ENCODE measurements at regions of chr22 and their contacts with region 1.

Region 1: GRCh38 chr22:39003165-39003638 is 10.9 kb upstream of the APOBEC3C start:
- DNase-seq: peak; percentile 51
- ATAC-seq: peak; percentile 94
- H3K4me3 Mint-ChIP-seq: no peak overlapping the region
- H3K27ac Mint-ChIP-seq: peak overlapping the region; percentile 41
- H3K4me1 Mint-ChIP-seq: peaks cover 18% of the 10 kb centered on the region
- H3K27me3 Mint-ChIP-seq: peaks cover under 1% of the 10 kb centered on the region
- CTCF ChIP-seq: peak; percentile 16

Region 2: DNA sequence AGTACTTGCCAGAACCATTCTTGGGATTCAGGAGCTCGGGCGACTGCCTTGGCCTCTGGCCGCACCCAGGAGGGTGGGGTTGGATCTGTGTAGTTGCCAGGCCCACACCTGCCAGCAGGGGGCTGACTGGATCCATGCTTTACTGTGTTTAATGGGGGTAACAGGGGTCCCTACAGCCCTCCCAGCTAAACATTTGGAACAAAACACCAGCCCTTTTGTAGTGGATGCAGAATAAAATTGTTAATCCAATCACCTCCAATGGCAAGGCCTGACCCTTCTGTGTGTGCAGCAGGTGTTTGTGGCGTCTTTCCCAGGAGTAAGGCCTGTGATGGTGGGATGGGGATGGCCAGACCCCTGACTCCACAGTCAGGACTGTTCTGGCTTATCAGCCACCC is 269.9 kb before region 1 on chr22:
- CTCF ChIA-PET with region 1: no interaction called
- POLR2A ChIA-PET with region 1: no interaction called
- intact Hi-C with region 1: loop called (anchors 1 kb)
- DNase-seq: no peak
- ATAC-seq: peak; percentile 76
- H3K4me3 Mint-ChIP-seq: no peak overlapping the region
- H3K27ac Mint-ChIP-seq: peak overlapping the region; percentile 75
- H3K4me1 Mint-ChIP-seq: peaks cover 26% of the 10 kb centered on the region
- H3K27me3 Mint-ChIP-seq: no peaks in the 10 kb centered on the region
- CTCF ChIP-seq: peak; percentile 58

Region 3: GRCh38 chr22:38872172-38872830 is 130.9 kb before region 1 on chr22 and contains the start of gene CBX6:
- CTCF ChIA-PET with region 1: interaction called, 132 read pairs
- POLR2A ChIA-PET with region 1: interaction called, 24 read pairs
- intact Hi-C with region 1: loop called (anchors 1 kb)
- DNase-seq: peak; percentile 97
- ATAC-seq: peak; percentile 73
- H3K4me3 Mint-ChIP-seq: peak within 1 kb of the TSS; percentile 92
- H3K27ac Mint-ChIP-seq: peak within 1 kb of the TSS; percentile 83
- H3K4me1 Mint-ChIP-seq: peaks cover 53% of the 10 kb centered on the region
- H3K27me3 Mint-ChIP-seq: peaks cover 2% of the 10 kb centered on the region
- CTCF ChIP-seq: no peak
- total RNA-seq, gene CBX6: 65.6 and 71.8 TPM in 2 replicates

Region 4: GRCh38 chr22:38973289-38974169 is 29.7 kb before region 1 on chr22:
- CTCF ChIA-PET with region 1: interaction called, 28 read pairs
- POLR2A ChIA-PET with region 1: interaction called, 13 read pairs
- intact Hi-C with region 1: loop called (anchors 1 kb)
- DNase-seq: no peak
- ATAC-seq: peak; percentile 98
- H3K4me3 Mint-ChIP-seq: no peak overlapping the region
- H3K27ac Mint-ChIP-seq: peak overlapping the region; percentile 24
- H3K4me1 Mint-ChIP-seq: peaks cover 2% of the 10 kb centered on the region
- H3K27me3 Mint-ChIP-seq: peaks cover 6% of the 10 kb centered on the region
- CTCF ChIP-seq: no peak

Region 5: GRCh38 chr22:38989466-38989865 is 13.7 kb before region 1 on chr22:
- CTCF ChIA-PET with region 1: interaction called, 5 read pairs
- POLR2A ChIA-PET with region 1: interaction called, 10 read pairs
- intact Hi-C with region 1: no loop called
- DNase-seq: no peak
- ATAC-seq: no peak
- H3K4me3 Mint-ChIP-seq: no peak overlapping the region
- H3K27ac Mint-ChIP-seq: no peak overlapping the region
- H3K4me1 Mint-ChIP-seq: peaks cover 35% of the 10 kb centered on the region
- H3K27me3 Mint-ChIP-seq: peaks cover 4% of the 10 kb centered on the region
- CTCF ChIP-seq: no peak

Region 6: DNA sequence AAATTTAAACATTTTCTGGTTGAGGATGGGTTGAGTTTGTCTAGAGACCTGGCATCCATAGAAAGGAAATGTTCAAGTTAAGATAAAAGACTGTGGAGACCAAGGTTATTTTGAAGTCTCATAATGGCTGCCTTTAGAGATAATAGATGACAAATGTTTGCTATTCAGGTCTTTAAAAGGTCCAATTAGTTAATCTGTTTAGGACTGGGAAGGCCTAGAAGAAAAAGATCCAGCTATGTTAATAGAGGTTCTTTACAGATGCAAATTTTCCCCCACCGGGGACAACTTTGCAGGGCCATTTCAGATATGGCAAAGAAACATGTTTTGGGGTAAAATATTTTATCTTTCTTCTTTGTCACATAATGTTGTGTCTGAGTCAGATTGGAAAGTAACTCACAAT is 70.7 kb after region 1 on chr22:
- CTCF ChIA-PET with region 1: no interaction called
- POLR2A ChIA-PET with region 1: no interaction called
- intact Hi-C with region 1: no loop called
- DNase-seq: no peak
- ATAC-seq: no peak
- H3K4me3 Mint-ChIP-seq: no peak overlapping the region
- H3K27ac Mint-ChIP-seq: peak overlapping the region; percentile 94
- H3K4me1 Mint-ChIP-seq: peaks cover 76% of the 10 kb centered on the region
- H3K27me3 Mint-ChIP-seq: no peaks in the 10 kb centered on the region
- CTCF ChIP-seq: no peak

Region 7: DNA sequence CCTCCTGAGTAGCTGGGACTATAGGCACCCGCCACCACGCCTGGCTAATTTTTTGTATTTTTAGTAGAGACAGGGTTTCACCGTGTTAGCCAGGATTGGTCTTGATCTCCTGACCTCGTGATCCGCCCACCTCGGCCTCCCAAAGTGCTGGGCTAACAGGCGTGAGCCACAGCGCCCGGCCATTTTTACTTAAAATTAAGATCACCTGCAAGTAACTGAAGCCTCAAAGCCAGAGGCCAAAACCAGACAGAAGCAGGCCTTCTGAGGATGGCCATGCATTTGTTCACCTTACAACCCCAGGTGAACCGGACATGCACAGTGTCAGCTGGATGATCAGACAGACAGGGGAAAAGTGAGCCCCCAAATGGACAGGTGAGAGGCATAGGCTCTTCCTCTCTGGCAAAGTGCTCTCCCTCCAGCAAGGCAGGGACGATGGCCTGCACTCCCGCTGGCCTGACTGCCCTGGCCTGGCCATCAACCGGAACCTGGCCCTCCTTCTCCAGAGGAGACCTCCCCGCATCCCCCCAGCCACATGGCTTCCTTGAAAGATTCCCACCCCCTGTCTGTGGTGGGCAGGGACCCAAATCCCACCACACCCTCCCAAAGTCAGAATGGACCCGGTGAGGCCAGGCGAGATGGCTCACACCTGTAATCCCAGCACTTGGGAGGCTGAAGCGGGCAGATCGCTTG is 119.7 kb after region 1 on chr22:
- CTCF ChIA-PET with region 1: interaction called, 17 read pairs
- POLR2A ChIA-PET with region 1: interaction called, 8 read pairs
- intact Hi-C with region 1: loop called (anchors 1 kb)
- DNase-seq: no peak
- ATAC-seq: no peak
- H3K4me3 Mint-ChIP-seq: no peak overlapping the region
- H3K27ac Mint-ChIP-seq: no peak overlapping the region
- H3K4me1 Mint-ChIP-seq: peaks cover 11% of the 10 kb centered on the region
- H3K27me3 Mint-ChIP-seq: no peaks in the 10 kb centered on the region
- CTCF ChIP-seq: no peak

Measured in activated B cell treated with CpG ODN at 0.5 μM for 24 hours (primary cell).